IMR-90 (cell line): ENCODE measurements at regions of chr9 and their contacts with region 1.

Region 1: DNA sequence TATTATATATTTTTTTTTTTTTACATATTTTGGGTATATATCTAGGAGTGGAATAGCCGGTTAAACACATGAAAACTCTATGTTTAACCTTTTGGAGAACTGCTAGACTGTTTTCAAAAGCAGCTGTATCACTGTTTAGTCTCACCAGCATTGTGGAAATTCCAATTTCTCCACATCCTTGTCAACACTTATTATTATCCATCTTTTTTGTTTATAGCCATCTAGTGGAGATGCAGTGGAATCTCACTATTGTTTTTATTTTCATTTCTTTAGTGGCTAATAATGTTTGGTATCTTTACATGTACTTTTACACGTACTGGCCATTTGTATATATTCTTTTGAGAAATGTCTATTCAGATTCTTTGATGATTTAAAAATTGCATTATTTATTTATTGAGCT is 22.7 kb upstream of the CCDC180 start:
- DNase-seq: no peak
- ATAC-seq: no peak
- H3K4me3 ChIP-seq: no peak overlapping the region
- H3K27ac ChIP-seq: no peak overlapping the region
- H3K4me1 ChIP-seq: no peaks in the 10 kb centered on the region
- H3K27me3 ChIP-seq: no peaks in the 10 kb centered on the region
- CTCF ChIP-seq: 0 out of 2 replicates have a peak, but pooled peaks have one; percentile 17
- POLR2A ChIP-seq: no peak
- RAD21 ChIP-seq: no peak

Region 2: GRCh38 chr9:97271292-97271691 is 13.5 kb before region 1 on chr9:
- CTCF ChIA-PET with region 1: no interaction called
- POLR2A ChIA-PET with region 1: interaction called, 12 read pairs
- dilution Hi-C with region 1: no loop called
- in situ Hi-C with region 1: no loop called
- intact Hi-C with region 1: no loop called
- DNase-seq: no peak
- ATAC-seq: no peak
- H3K4me3 ChIP-seq: no peak overlapping the region
- H3K27ac ChIP-seq: no peak overlapping the region
- H3K4me1 ChIP-seq: no peaks in the 10 kb centered on the region
- H3K27me3 ChIP-seq: no peaks in the 10 kb centered on the region
- CTCF ChIP-seq: no peak
- POLR2A ChIP-seq: no peak
- RAD21 ChIP-seq: no peak

Region 3: GRCh38 chr9:98823666-98824334 is 1539.0 kb after region 1 on chr9:
- CTCF ChIA-PET with region 1: no interaction called
- POLR2A ChIA-PET with region 1: no interaction called
- dilution Hi-C with region 1: no loop called
- in situ Hi-C with region 1: no loop called
- intact Hi-C with region 1: no loop called
- DNase-seq: no peak
- ATAC-seq: no peak
- H3K4me3 ChIP-seq: no peak overlapping the region
- H3K27ac ChIP-seq: no peak overlapping the region
- H3K4me1 ChIP-seq: no peaks in the 10 kb centered on the region
- H3K27me3 ChIP-seq: peaks cover 2% of the 10 kb centered on the region; the same call in 1 of the 2 replicates
- CTCF ChIP-seq: no peak
- POLR2A ChIP-seq: no peak
- RAD21 ChIP-seq: no peak